Natural killer cell (primary cell): ENCODE measurements at regions of chr5 and their contacts with region 1.

Region 1: GRCh38 chr5:126499853-126500342 is 76.7 kb downstream of the GRAMD2B start:
- DNase-seq: peak in 1 of 2 donors; percentile 79
- ATAC-seq: peak; percentile 55 to 72 (median 64)
- H3K4me3 ChIP-seq: no peak overlapping the region
- H3K4me3 Mint-ChIP-seq: no peak overlapping the region
- H3K27ac ChIP-seq: no peak overlapping the region
- H3K27ac Mint-ChIP-seq: no peak overlapping the region
- H3K4me1 ChIP-seq: no peaks in the 10 kb centered on the region
- H3K4me1 Mint-ChIP-seq: no peaks in the 10 kb centered on the region
- H3K27me3 ChIP-seq: no peaks in the 10 kb centered on the region
- H3K27me3 Mint-ChIP-seq: no peaks in the 10 kb centered on the region
- CTCF ChIP-seq: peak; percentile 53

Region 2: DNA sequence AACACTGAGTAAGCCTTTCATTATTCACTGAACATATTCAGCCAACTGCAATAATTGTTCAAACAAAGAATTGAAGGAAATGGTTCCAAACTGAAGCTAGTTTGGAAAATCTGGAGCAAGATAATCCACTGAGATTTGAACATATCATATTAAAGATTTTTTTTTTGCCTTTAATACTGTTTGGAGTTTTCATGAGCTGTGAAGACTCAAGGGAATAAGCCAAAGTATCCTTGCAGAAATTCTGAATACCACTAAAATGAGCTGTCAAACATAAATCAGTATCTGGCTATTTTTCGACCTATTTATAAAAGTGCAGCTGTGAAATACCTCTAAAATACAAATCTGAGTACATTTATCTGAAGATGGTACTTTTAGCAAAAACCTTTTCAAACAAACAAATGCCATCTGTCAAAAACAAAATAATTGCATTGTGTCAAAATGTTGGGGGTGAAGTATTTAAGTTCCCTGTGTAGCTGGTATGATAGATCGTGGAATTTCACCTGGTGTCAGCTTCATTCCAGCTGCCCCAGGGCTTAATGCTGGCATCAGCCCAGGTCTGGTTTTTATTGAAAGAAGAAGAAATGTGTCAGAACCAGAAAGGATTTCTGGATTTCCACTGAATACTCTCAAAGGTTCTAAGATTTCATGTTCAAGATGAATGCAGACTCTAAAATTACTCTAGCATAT is 225.7 kb before region 1 on chr5:
- intact Hi-C with region 1: no loop called
- DNase-seq: no peak
- ATAC-seq: no peak
- H3K4me3 ChIP-seq: no peak overlapping the region
- H3K4me3 Mint-ChIP-seq: no peak overlapping the region
- H3K27ac ChIP-seq: no peak overlapping the region
- H3K27ac Mint-ChIP-seq: no peak overlapping the region
- H3K4me1 ChIP-seq: no peaks in the 10 kb centered on the region
- H3K4me1 Mint-ChIP-seq: no peaks in the 10 kb centered on the region
- H3K27me3 ChIP-seq: no peaks in the 10 kb centered on the region
- H3K27me3 Mint-ChIP-seq: no peaks in the 10 kb centered on the region
- CTCF ChIP-seq: no peak

Region 3: GRCh38 chr5:126339215-126339805 is 160.6 kb before region 1 on chr5:
- intact Hi-C with region 1: loop called (anchors 1 kb)
- DNase-seq: peak in 1 of 2 donors; percentile 80
- ATAC-seq: peak; percentile 58 to 64 (median 59)
- H3K4me3 ChIP-seq: no peak overlapping the region
- H3K4me3 Mint-ChIP-seq: no peak overlapping the region
- H3K27ac ChIP-seq: no peak overlapping the region
- H3K27ac Mint-ChIP-seq: no peak overlapping the region
- H3K4me1 ChIP-seq: no peaks in the 10 kb centered on the region
- H3K4me1 Mint-ChIP-seq: no peaks in the 10 kb centered on the region
- H3K27me3 ChIP-seq: no peaks in the 10 kb centered on the region
- H3K27me3 Mint-ChIP-seq: peaks cover 7 to 37% of the 10 kb centered on the region in 2 donors
- CTCF ChIP-seq: peak; percentile 87

Region 4: DNA sequence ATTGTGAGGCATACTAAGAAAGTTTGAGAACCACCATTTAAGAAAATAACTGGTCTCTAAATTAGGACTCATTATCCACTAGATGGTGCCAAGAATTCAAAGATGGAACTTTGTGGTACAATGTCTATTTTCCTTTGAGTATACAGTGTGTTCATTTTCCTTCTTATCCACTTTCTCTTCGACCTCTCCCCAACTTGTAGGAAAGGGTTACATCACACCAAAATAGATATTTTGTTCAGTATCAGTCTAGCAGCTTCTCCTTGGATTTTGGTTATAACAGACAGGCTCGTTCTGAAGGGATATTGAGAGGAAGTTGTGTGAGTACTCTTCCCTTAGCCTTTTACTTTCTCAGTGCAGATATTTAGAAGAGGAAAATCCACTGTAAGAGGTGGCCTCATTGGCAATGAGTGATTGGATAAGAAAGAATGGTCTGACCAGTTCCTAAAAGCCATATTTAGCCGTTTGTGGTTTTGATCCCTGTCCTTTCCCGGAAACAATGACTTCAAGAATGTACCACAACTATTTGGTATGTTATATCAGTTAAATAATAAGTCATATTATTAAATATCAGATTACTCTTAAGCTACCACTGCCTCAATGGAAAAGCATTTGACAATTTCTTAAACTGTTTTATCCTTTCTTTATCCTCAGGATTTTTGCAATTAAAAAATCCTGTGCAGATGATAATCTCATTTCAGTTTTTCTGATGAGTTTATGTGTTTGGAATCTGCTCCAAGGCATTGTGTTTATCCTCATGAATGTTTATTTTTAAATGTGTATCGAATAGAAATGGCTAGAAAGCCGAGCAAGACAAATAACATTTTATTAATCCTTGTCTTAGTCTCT is 145.7 kb before region 1 on chr5:
- intact Hi-C with region 1: loop called (anchors 1 kb)
- DNase-seq: peak in 1 of 2 donors; percentile 72
- ATAC-seq: peak in 2 of 3 donors; percentile 54 to 62
- H3K4me3 ChIP-seq: no peak overlapping the region
- H3K4me3 Mint-ChIP-seq: peak overlapping the region; percentile 22
- H3K27ac ChIP-seq: no peak overlapping the region
- H3K27ac Mint-ChIP-seq: no peak overlapping the region
- H3K4me1 ChIP-seq: peaks cover 7% of the 10 kb centered on the region
- H3K4me1 Mint-ChIP-seq: peaks cover 15 to 20% of the 10 kb centered on the region in 2 donors
- H3K27me3 ChIP-seq: no peaks in the 10 kb centered on the region
- H3K27me3 Mint-ChIP-seq: peaks cover 5 to 6% of the 10 kb centered on the region in 2 donors
- CTCF ChIP-seq: peak; percentile 64

Region 5: GRCh38 chr5:126575644-126576043 is 75.7 kb after region 1 on chr5:
- intact Hi-C with region 1: no loop called
- DNase-seq: no peak
- ATAC-seq: no peak
- H3K4me3 ChIP-seq: no peak overlapping the region
- H3K4me3 Mint-ChIP-seq: no peak overlapping the region
- H3K27ac ChIP-seq: no peak overlapping the region
- H3K27ac Mint-ChIP-seq: no peak overlapping the region
- H3K4me1 ChIP-seq: no peaks in the 10 kb centered on the region
- H3K4me1 Mint-ChIP-seq: no peaks in the 10 kb centered on the region
- H3K27me3 ChIP-seq: no peaks in the 10 kb centered on the region
- H3K27me3 Mint-ChIP-seq: no peaks in the 10 kb centered on the region
- CTCF ChIP-seq: no peak